HepG2 (cell line): ENCODE measurements at regions of chr3 and their contacts with region 1.

Region 1: GRCh38 chr3:36700537-36701248 is 63.7 kb downstream of the DCLK3 start:
- DNase-seq: peak; percentile 44
- ATAC-seq: peak; percentile 97
- H3K4me3 ChIP-seq: no peak overlapping the region
- H3K27ac ChIP-seq: no peak overlapping the region
- H3K4me1 ChIP-seq: no peaks in the 10 kb centered on the region
- H3K27me3 ChIP-seq: no peaks in the 10 kb centered on the region
- CTCF ChIP-seq: peak; percentile 84
- EP300 ChIP-seq: no peak
- POLR2A ChIP-seq: no peak
- RAD21 ChIP-seq: peak; percentile 72

Region 2: DNA sequence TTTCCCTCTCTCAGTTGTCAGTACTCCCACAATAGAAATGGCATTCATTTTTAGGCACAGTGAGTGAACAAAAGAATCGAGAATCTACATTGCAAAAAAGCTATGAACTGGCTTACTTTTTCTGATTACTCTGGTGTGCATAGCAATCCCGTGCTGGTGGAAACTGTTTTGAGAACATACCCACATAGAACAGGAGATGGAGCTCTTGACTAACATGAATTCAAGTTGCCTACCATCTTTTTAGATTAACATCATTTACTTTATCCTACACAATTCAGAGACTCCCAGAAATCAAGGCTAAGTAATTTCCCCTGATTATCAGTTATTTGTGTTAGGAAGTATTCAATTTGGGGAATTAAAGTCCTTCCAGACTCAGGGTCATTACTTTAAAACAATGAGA is 734.8 kb before region 1 on chr3:
- CTCF ChIA-PET with region 1: interaction called, 12 read pairs
- POLR2A ChIA-PET with region 1: no interaction called
- in situ Hi-C with region 1: loop called (anchors 10 kb)
- intact Hi-C with region 1: no loop called
- DNase-seq: no peak
- ATAC-seq: peak; percentile 49; the same call in 2 of the 3 replicates
- H3K4me3 ChIP-seq: no peak overlapping the region
- H3K27ac ChIP-seq: no peak overlapping the region
- H3K4me1 ChIP-seq: no peaks in the 10 kb centered on the region
- H3K27me3 ChIP-seq: no peaks in the 10 kb centered on the region; a peak in 1 of 5 replicates
- CTCF ChIP-seq: peak; percentile 44
- EP300 ChIP-seq: no peak
- POLR2A ChIP-seq: no peak
- RAD21 ChIP-seq: no peak

Region 3: DNA sequence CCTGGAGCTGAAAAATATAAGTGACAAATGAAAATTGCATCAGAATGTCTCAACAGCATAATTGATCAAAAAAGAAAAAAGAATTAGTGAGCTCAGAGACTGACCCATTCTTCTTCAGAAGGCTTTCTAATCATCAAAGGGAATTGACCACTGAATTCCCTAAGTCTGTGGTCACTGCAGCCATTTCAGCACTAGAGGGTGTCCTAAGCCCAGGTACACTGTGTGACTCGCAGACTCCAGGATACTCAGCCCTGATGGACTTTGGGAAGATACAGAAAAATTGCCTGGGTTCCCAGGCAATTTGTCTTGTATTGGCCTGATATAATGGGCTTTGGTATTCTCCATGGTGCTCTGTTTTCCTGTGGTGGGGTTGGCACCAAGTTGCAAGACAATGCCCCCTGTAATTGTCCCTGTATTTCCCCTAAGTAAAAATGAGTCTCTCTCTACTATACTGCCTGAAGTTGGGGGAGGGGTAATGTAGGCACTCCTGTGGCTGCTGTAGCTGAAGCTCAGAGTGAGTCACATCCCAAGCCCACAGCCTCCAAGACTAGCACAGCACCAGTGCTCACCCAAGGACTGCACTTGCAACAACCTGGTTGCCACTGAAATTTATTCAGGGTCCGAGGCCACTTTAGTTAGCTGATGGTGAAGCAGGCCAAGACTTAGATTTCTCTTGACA is 576.4 kb before region 1 on chr3:
- CTCF ChIA-PET with region 1: interaction called, 5 read pairs
- POLR2A ChIA-PET with region 1: no interaction called
- in situ Hi-C with region 1: no loop called
- intact Hi-C with region 1: loop called (anchors 1 kb)
- DNase-seq: peak; percentile 38
- ATAC-seq: peak; percentile 92
- H3K4me3 ChIP-seq: no peak overlapping the region
- H3K27ac ChIP-seq: no peak overlapping the region
- H3K4me1 ChIP-seq: no peaks in the 10 kb centered on the region
- H3K27me3 ChIP-seq: no peaks in the 10 kb centered on the region
- CTCF ChIP-seq: peak; percentile 59
- EP300 ChIP-seq: no peak
- POLR2A ChIP-seq: no peak
- RAD21 ChIP-seq: peak; percentile 31; the same call in 1 of the 2 replicates

Region 4: DNA sequence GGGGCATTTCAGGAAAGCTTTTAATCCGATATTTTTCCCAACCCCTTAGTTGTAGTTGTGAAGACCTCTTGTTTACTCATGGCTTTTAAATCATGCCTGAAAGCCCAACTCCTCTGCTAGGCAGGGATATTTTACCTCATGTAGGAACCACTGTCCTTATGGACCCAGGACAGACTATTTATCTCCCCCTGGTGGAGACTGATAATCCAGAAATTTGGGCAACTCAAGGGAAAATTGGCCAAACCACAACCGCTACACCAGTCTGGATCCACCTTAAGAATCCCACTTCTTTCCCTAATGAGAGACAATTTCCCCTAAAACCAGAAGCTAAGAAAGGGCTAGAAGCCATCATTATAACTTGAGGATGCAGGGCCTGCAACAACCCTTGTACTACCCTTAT is 568.5 kb before region 1 on chr3:
- CTCF ChIA-PET with region 1: no interaction called
- POLR2A ChIA-PET with region 1: no interaction called
- in situ Hi-C with region 1: loop called (anchors 10 kb)
- intact Hi-C with region 1: no loop called
- DNase-seq: no peak
- ATAC-seq: no peak
- H3K4me3 ChIP-seq: no peak overlapping the region
- H3K27ac ChIP-seq: no peak overlapping the region
- H3K4me1 ChIP-seq: no peaks in the 10 kb centered on the region
- H3K27me3 ChIP-seq: no peaks in the 10 kb centered on the region
- CTCF ChIP-seq: no peak
- EP300 ChIP-seq: no peak
- POLR2A ChIP-seq: no peak
- RAD21 ChIP-seq: no peak

Region 5: DNA sequence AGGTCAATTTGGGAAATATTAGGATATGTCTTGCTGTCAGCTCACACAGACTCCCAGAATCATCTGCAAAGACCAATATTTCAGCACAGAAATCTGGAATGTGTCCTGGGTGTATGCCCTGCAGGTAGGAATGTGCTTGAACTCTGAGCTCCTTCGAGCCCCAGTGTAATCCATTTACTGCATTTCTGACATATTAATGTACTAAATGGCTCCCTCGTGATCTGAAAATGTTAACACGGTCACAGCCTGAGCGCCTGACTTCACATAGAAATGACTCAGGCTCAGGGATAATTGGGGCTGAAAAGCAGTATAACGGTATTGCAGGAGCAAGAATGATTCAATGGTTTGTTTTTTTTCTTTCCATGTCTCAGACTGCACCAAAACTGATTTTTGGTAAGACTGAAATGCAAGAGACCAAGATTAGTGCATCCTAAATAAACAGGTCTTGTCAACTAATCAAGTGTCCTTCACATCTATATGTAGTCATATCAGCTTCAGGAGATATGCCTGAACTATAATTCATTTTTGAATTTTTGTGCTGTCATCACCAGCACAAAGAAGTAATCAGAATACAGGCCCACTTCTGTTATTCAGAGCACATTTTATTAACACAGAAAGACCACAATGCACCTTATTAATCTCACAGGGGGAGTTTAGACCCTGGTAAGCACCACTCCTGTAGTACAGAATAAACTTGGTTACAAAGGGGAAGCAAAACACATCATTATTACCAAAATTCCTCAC is 13.8 kb after region 1 on chr3:
- CTCF ChIA-PET with region 1: no interaction called
- POLR2A ChIA-PET with region 1: no interaction called
- in situ Hi-C with region 1: no loop called
- intact Hi-C with region 1: no loop called
- DNase-seq: no peak
- ATAC-seq: peak; percentile 80
- H3K4me3 ChIP-seq: no peak overlapping the region
- H3K27ac ChIP-seq: no peak overlapping the region
- H3K4me1 ChIP-seq: no peaks in the 10 kb centered on the region
- H3K27me3 ChIP-seq: no peaks in the 10 kb centered on the region
- CTCF ChIP-seq: no peak
- EP300 ChIP-seq: no peak
- POLR2A ChIP-seq: no peak
- RAD21 ChIP-seq: no peak